ENCODE measurements at regions of chr10 and their contacts with region 1.

Region 1: GRCh38 chr10:30687698-30688219 is 58.2 kb upstream of the LYZL2 start:
- DNase-seq: peak; percentile 87
- H3K4me3 Mint-ChIP-seq: no peak overlapping the region
- H3K27ac Mint-ChIP-seq: no peak overlapping the region
- H3K4me1 Mint-ChIP-seq: peaks cover 24% of the 10 kb centered on the region
- H3K27me3 Mint-ChIP-seq: peaks cover 27% of the 10 kb centered on the region

Region 2: DNA sequence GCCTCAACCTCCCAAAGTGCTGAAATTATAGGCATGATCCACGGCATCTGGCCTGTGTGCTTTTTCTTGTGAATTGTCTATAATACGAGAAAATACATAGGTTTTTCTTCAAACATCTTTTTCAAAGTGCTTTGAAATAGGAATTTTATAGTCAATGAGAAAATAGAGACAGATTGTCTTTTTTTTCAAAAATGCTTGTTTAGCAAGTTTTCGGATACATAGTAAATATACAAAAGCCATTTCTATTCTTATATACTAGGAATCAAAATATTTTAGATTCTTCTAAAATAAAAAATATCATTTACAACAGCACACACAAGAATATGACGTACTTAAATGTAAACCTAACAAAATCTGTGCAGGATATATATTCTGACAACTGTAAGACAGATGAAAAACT is 56.6 kb before region 1 on chr10:
- CTCF ChIA-PET with region 1: no interaction called
- DNase-seq: no peak
- H3K4me3 Mint-ChIP-seq: no peak overlapping the region
- H3K27ac Mint-ChIP-seq: no peak overlapping the region
- H3K4me1 Mint-ChIP-seq: no peaks in the 10 kb centered on the region
- H3K27me3 Mint-ChIP-seq: peaks cover 22% of the 10 kb centered on the region

Region 3: DNA sequence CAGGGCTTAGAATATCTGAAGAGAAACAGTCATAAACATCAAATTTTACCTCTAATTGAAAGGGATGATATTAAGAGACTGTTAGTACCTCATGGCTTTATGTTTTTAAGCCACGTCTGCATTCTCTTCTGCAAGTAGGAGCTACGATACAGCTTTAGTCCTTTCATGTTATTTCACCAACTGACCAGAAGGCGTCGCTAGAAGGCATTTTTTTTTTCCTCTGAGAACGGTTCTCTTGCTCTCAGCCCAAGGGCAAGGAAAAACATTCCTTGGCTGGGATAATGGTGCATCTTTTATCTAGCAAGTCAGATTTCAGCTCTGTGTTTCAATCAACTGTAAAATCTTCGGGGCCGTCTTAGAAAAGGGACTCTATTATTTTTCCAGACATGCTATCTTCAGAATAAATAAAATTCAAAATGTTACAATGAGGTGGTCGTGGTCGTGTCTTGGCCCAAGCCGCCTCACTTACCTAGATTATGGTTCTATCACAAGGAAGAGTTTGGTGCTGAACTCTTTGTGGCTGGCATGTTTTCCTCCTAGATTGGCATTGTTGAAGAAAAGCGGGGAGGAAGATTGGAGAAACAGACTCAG is 16.6 kb before region 1 on chr10:
- CTCF ChIA-PET with region 1: interaction called, 13 read pairs
- DNase-seq: no peak
- H3K4me3 Mint-ChIP-seq: peak overlapping the region; percentile 12
- H3K27ac Mint-ChIP-seq: no peak overlapping the region
- H3K4me1 Mint-ChIP-seq: peaks cover 9% of the 10 kb centered on the region
- H3K27me3 Mint-ChIP-seq: peaks cover 34% of the 10 kb centered on the region

Region 4: GRCh38 chr10:30701451-30702173 is 13.9 kb after region 1 on chr10:
- CTCF ChIA-PET with region 1: interaction called, 41 read pairs
- DNase-seq: peak; percentile 82
- H3K4me3 Mint-ChIP-seq: peak overlapping the region; percentile 70
- H3K27ac Mint-ChIP-seq: peak overlapping the region; percentile 98
- H3K4me1 Mint-ChIP-seq: peaks cover 95% of the 10 kb centered on the region
- H3K27me3 Mint-ChIP-seq: no peaks in the 10 kb centered on the region

Region 5: DNA sequence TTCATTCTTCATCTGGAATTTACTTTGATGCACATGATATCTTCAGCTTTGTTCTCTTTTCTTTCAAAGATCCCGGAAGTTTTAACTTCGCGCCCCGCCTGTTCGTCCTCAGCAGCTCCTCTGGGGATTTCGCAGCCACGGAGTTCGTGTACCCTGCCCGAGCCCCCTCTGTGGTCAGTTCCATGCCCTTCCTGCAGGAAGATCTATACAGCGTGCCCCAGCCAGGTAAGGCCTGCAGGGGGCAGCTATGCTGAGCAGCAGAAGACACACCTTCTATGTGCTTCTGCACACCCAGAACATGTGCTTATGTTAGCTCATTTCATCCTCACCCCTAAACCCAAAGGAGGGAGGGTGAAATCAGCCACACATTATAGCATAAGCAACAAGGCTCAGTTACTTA is 21.5 kb after region 1 on chr10:
- CTCF ChIA-PET with region 1: interaction called, 41 read pairs
- DNase-seq: no peak
- H3K4me3 Mint-ChIP-seq: no peak overlapping the region
- H3K27ac Mint-ChIP-seq: no peak overlapping the region
- H3K4me1 Mint-ChIP-seq: peaks cover 34% of the 10 kb centered on the region
- H3K27me3 Mint-ChIP-seq: peaks cover 3% of the 10 kb centered on the region